ENCODE measurements at regions of chr5 and their contacts with region 1.

Region 1: GRCh38 chr5:158174918-158175851 is 316.2 kb upstream of the CLINT1 start:
- DNase-seq: peak; percentile 83
- H3K4me3 ChIP-seq: no peak overlapping the region
- H3K27ac ChIP-seq: no peak overlapping the region
- H3K4me1 ChIP-seq: peaks cover 17% of the 10 kb centered on the region; the same call in 1 of the 2 replicates
- H3K27me3 ChIP-seq: no peaks in the 10 kb centered on the region

Region 2: DNA sequence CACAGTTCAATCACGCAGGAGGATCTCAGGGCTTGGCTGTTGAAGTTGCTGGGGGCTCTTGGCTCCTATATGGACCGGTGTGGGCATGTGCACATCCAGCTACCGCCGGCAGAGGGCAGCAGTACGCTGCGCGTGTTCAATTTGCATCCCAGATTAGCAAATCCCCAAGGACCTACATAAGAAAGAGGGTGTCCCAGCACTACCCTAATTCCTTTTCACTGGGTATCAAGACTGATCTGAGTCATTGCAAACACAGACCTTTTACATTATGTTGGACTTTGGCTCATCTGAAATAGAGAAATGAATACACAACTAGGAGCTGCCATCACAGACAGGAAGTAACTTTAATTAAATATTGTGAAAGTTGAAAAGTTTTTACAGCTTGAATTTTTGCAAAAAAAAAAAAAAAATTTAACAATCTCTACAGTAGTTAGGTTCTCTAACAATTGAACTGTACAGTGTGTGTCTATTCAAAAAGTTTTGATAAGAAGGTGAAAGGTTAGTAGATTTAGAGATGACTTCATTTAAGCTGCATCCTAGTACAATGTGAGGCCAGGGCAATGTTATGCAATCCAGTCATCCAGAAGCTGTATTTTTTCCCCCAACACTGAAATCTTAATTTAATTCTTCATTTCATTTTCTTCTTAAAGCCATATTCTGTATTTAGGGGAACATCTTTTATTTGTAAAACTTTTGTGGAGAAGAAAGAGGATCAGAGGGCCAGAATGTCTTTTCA is 520.6 kb after region 1 on chr5:
- in situ Hi-C with region 1: loop called (anchors 10 kb)
- DNase-seq: peak; percentile 92
- H3K4me3 ChIP-seq: no peak overlapping the region
- H3K27ac ChIP-seq: peak overlapping the region; percentile 7; the same call in 1 of the 2 replicates
- H3K4me1 ChIP-seq: peaks cover 54% of the 10 kb centered on the region
- H3K27me3 ChIP-seq: no peaks in the 10 kb centered on the region

Measured in GM23248 (cell line).